Cardiac septum (tissue), 1 donor: ENCODE measurements at regions of chr17 and their contacts with region 1.

Region 1: DNA sequence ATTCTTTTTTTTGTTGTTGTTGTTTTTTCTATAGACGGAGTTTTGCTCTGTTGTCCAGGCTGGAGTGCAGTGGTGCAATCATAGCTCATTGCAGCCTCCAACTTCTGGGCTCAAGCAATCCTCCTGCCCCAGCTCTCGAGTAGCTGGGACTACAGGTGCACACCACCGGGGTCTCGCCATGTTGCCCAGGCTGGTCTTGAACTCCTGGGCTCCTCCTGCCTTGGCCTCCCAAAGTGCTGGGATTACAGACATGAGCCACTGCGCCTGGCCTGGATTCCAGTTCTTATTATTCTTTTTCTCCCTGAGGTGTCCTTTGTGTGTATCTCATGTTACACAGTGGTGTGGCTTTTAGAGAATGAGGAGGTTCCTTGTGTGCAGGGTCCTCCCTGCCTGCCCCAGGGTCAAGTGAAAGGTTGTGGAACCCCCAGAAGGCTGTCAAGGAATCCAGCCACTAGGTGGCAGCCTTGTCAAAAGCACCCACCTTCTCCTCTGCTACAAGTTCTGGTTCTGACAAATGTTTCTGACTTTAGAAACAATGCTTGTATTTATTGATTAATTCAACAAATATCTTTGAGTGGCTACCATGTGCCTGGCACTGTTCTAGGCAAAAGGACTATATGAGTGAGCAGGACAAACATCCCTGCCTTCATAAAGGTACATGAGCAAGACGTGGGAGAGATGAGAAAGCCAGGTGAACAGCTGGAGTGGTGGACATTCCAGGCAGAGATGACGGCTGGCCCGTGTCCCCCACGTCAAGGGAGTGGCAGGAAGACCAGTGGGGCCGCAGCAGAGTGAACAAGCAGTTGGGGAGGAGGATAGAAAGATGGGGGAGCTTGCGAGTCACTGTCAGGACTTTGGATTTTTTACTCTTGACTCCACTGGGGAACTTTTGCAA is 112.4 kb downstream of the SPECC1 start:
- DNase-seq: no peak

Region 2: DNA sequence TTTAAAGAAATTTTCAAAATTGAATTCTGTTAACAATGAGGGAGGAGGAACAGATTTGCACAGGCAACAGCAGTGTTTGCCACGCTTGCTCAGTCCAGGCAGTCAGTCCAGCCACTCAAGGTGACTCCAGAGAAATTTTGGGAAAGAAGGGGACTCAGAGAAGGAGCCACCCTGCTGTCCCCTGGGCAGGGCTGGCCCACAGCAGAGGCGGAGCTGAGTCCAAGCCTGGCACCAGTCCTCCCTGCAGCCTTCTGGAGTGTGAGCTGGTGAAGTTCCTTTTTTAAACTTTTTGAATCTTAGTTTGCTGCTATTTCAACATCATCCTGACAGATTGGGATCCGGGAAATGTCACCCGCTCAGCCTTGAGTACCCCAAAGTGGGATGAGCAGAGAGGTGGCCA is 390.8 kb before region 1 on chr17:
- intact Hi-C with region 1: no loop called
- DNase-seq: no peak

Region 3: DNA sequence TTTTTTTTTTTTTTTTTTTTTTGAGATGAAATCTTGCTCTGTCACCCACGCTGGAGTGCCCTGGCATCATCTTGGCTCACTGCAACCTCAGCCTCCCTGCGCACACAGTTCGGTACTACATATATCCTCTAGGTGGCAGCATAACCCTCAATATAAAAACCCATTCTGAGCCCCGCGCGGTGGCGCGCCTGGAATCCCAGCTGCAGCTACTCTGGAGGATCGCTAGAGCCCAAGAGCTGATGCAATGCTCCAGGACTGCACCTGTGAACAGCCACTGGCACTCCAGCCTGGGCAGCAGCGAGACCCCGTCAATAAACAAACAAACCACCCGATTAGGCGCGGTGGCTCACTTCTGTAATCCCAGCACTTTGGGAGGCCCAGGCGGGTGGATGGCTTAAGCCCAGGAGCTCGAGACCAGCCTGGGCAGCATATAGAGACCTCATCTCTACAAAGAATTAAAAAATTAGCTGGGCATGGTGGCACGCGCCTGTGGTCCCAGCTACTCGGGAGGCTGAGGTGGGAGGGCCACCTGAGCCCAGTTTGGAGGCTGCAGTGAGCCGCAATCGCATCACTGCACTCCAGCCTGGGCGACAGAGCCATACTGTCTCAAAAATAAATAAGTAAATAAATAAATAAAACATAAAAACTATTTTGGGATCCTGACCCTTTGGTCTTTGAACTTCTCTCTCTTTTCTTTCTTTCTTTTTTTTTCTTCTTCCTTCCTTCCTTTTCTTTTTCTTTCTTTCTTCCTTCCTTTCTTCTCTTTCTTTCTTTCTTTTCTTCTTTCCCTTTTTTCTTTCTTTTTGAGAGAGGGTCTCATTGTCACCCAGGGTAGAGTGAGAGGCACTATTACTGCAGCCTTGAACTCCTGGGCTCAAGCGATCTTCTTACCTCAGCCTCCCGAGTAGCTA is 128.5 kb before region 1 on chr17:
- intact Hi-C with region 1: loop called (anchors 2 kb)
- DNase-seq: peak; percentile 89

Region 4: GRCh38 chr17:20009302-20010098 is 112.1 kb before region 1 on chr17 and contains the start of gene SPECC1:
- intact Hi-C with region 1: loop called (anchors 5 kb)
- DNase-seq: peak; percentile 93
- total RNA-seq, gene SPECC1: 10.1 TPM

Region 5: GRCh38 chr17:20226814-20227482 is 105.3 kb after region 1 on chr17:
- intact Hi-C with region 1: loop called (anchors 5 kb)
- DNase-seq: peak; percentile 86

Region 6: DNA sequence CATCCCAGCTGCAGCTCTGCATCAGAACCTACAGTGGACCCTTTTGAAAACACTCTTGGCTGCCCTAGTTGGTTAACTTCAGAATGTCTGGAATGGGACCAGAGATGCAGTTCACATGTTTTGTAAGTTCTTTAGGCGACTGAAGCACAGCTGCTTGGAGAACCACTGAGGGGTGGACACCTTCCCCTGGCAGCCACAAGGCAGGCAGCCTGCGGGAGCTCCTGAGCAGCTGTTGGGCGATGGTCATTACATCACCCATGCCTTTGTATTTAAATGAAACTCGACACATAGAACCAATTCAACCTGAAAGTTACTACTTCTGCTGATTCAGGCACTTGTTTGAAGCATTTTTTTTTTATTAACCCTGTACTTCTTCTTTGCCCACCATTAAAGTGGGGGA is 194.2 kb after region 1 on chr17:
- intact Hi-C with region 1: loop called (anchors 5 kb)
- DNase-seq: no peak